ENCODE measurements at regions of chr16 and their contacts with region 1.

Region 1: GRCh38 chr16:1342526-1343427 is 8.9 kb downstream of the TSR3 start:
- DNase-seq: peak; percentile 97 to 99
- H3K4me3 ChIP-seq: peak overlapping the region; percentile 61
- H3K4me3 Mint-ChIP-seq: peak overlapping the region; percentile 83
- H3K27ac Mint-ChIP-seq: peak overlapping the region; percentile 68
- H3K4me1 ChIP-seq: 0 out of 2 replicates have a peak, but pooled peaks cover 3% of the 10 kb centered on the region
- H3K4me1 Mint-ChIP-seq: peaks cover 8% of the 10 kb centered on the region
- H3K27me3 ChIP-seq: peaks cover 1% of the 10 kb centered on the region; the same call in 1 of the 2 replicates
- H3K27me3 Mint-ChIP-seq: peaks cover 3% of the 10 kb centered on the region
- CTCF ChIP-seq: no peak

Region 2: DNA sequence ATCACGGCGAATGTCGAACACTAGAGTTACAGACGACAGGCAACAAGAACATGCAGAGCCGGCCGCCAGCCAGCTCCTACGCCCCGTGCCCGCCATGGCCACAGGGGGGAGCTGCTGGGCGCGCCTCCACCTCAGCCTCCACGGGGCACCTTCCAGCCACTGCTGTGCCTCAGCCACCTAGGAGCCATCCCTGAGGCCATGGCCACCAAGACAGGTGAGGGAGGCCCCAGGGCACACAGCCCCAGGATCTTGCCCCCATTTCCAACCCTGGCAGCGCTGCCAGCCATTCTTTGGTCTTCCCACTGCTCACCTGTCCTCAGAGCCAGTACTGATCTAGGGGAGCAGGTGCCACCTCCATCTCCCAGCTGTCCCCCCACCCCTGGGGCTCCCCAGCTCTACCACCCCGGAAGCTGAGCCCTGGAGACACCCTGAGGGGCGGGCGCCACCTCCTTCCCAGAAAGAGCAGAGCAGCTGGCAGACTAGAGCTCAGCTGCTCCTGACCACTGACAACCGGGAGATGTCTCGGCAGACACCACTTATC is 20.8 kb after region 1 on chr16:
- CTCF ChIA-PET with region 1: interaction called, 11 read pairs
- POLR2A ChIA-PET with region 1: no interaction called
- intact Hi-C with region 1: no loop called
- DNase-seq: peak in 1 of 2 experiments; percentile 74
- H3K4me3 ChIP-seq: no peak overlapping the region
- H3K4me3 Mint-ChIP-seq: no peak overlapping the region
- H3K27ac Mint-ChIP-seq: no peak overlapping the region
- H3K4me1 ChIP-seq: no peaks in the 10 kb centered on the region
- H3K4me1 Mint-ChIP-seq: no peaks in the 10 kb centered on the region
- H3K27me3 ChIP-seq: no peaks in the 10 kb centered on the region
- H3K27me3 Mint-ChIP-seq: no peaks in the 10 kb centered on the region
- CTCF ChIP-seq: peak; percentile 72 to 83

Region 3: GRCh38 chr16:1492082-1492922 is 149.5 kb after region 1 on chr16:
- CTCF ChIA-PET with region 1: interaction called, 12 read pairs
- POLR2A ChIA-PET with region 1: no interaction called
- intact Hi-C with region 1: no loop called
- DNase-seq: no peak
- H3K4me3 ChIP-seq: peak overlapping the region; percentile 59
- H3K4me3 Mint-ChIP-seq: peak overlapping the region; percentile 96
- H3K27ac Mint-ChIP-seq: peak overlapping the region; percentile 98
- H3K4me1 ChIP-seq: peaks cover 5% of the 10 kb centered on the region; the same call in 1 of the 2 replicates
- H3K4me1 Mint-ChIP-seq: no peaks in the 10 kb centered on the region
- H3K27me3 ChIP-seq: no peaks in the 10 kb centered on the region
- H3K27me3 Mint-ChIP-seq: no peaks in the 10 kb centered on the region
- CTCF ChIP-seq: no peak

Region 4: DNA sequence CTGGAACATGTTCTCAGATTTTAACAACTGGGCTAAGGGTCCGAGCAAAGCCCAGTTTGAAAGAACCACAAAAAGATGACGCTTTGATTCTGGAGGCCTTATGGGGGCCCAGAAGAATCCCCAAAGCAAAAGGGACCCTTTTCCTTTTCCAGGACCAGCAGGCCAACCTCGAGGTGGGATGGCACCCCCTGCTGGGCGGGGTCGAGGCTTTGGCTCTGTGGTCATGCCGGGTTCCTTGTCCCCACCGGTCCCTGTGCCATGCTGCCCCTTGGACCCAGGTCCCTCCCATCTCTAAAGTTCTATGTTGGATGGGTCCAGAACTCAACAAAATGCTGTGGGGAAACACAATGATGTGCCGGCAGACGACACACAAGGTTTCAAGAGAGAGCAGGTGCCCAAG is 221.5 kb after region 1 on chr16:
- CTCF ChIA-PET with region 1: interaction called, 13 read pairs
- POLR2A ChIA-PET with region 1: no interaction called
- intact Hi-C with region 1: no loop called
- DNase-seq: no peak
- H3K4me3 ChIP-seq: no peak overlapping the region
- H3K4me3 Mint-ChIP-seq: no peak overlapping the region
- H3K27ac Mint-ChIP-seq: no peak overlapping the region
- H3K4me1 ChIP-seq: no peaks in the 10 kb centered on the region
- H3K4me1 Mint-ChIP-seq: no peaks in the 10 kb centered on the region
- H3K27me3 ChIP-seq: no peaks in the 10 kb centered on the region
- H3K27me3 Mint-ChIP-seq: no peaks in the 10 kb centered on the region
- CTCF ChIP-seq: peak in 1 of 2 experiments; percentile 30